Esophagus muscularis mucosa (tissue), 4 donors: ENCODE measurements at regions of chr3 and their contacts with region 1.

Region 1: DNA sequence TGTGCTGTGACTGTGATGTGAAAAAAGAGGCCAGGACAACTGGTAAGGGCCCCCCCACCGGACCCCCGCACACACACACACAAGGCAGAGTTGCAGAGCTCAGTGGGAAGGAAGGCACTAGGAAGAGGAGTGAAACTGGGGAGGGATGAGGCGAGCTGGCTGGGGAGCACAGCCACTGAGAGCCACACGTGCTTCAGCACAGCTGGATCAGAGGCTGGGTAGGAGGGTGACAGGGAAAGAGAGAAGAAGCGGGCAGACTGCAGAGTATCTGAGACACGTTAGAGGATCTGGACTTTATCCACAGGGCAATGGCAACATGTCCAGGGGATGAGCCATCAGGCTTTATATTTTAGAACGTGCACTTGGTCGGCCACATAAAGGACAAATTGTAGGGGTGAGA is 38.0 kb upstream of the TKT start:
- DNase-seq: no peak
- H3K4me3 ChIP-seq: no peak overlapping the region
- H3K27ac ChIP-seq: no peak overlapping the region
- H3K4me1 ChIP-seq: peaks cover 0 to 11% (median 6%) of the 10 kb centered on the region in 4 donors
- H3K27me3 ChIP-seq: no peaks in the 10 kb centered on the region
- CTCF ChIP-seq: no peak
- EP300 ChIP-seq: no peak
- POLR2A ChIP-seq: no peak

Region 2: DNA sequence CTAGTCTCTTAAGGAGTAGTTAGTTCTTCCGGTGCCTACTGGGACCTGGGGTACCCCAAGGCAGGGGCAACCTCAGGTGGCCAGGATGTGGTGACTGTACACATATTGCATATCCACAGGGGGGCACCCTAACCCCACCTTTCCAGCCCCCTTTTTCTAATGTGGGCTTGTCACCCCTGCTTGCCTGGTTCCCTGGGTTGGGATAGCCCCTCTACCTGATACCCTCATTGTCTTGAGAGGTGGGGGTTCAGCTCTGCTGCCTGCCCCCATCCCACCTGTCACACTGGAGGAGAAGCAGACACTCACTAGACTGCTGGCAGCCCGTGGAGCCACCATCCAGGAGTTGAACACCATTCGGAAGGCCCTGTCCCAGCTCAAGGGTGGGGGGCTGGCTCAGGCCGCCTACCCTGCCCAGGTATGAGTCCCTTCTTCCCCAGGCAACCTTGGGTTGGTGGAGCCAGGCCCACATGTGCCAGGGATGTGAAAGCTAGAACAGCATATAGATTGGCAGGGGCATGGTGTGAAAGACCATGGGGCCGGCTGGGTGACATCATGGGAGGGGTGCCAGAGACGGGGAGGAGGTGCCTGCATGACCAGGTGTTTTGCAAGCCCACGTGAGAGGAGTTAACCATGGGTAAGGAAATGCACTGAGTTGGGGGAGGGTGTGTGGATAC is 1002.2 kb before region 1 on chr3:
- intact Hi-C with region 1: no loop called
- DNase-seq: no peak
- H3K4me3 ChIP-seq: no peak overlapping the region
- H3K27ac ChIP-seq: no peak overlapping the region
- H3K4me1 ChIP-seq: peaks cover 14 to 18% (median 16%) of the 10 kb centered on the region in 4 donors
- H3K27me3 ChIP-seq: no peaks in the 10 kb centered on the region
- CTCF ChIP-seq: peak; percentile 20 to 29 (median 25)
- EP300 ChIP-seq: no peak
- POLR2A ChIP-seq: no peak

Region 3: DNA sequence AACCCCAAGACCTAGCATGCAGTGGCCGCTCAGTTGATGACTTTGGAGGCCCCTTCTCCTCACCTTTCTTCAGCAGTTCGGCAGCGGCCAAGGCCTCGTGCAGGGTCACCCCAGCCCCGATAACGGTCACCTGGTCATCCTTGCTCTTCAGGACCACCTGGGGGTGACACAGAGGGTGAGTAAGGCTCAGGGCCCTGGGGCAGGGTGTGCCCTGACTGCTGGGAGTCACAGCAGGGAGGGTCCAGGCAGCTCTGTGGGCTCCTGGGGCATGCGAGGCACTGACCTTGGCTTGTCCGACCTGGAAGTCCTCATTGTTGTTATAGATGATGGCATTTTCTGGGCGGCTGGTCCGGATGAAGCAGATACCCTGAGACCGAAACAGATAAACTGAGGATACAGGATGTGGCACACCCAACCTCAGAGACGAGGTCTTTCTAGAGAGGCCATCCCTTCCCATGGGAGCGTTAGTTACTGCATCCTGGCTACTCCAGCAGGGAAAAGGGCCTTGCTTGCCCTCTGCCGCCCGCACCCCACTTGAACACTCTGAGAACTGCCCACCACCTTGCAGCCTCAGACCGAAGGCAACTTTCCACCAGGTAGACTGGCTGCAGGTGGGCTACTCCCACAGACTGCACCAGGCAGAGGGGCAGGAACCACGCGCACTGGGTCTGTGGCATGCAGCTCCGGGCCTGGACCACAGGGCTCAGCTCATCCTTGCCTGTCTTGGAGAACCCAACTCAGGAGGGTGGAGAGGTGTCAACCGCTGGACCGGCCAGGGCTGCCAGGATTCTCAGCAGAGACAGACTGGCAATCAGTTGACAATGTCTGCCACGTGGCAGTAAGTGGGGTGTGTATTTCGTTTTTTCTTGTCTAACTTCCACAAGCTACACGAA is 65.6 kb before region 1 on chr3:
- intact Hi-C with region 1: loop called (anchors 5 kb)
- DNase-seq: no peak
- H3K4me3 ChIP-seq: no peak overlapping the region
- H3K27ac ChIP-seq: no peak overlapping the region
- H3K4me1 ChIP-seq: no peaks in the 10 kb centered on the region
- H3K27me3 ChIP-seq: no peaks in the 10 kb centered on the region
- CTCF ChIP-seq: no peak
- EP300 ChIP-seq: no peak
- POLR2A ChIP-seq: no peak

Region 4: DNA sequence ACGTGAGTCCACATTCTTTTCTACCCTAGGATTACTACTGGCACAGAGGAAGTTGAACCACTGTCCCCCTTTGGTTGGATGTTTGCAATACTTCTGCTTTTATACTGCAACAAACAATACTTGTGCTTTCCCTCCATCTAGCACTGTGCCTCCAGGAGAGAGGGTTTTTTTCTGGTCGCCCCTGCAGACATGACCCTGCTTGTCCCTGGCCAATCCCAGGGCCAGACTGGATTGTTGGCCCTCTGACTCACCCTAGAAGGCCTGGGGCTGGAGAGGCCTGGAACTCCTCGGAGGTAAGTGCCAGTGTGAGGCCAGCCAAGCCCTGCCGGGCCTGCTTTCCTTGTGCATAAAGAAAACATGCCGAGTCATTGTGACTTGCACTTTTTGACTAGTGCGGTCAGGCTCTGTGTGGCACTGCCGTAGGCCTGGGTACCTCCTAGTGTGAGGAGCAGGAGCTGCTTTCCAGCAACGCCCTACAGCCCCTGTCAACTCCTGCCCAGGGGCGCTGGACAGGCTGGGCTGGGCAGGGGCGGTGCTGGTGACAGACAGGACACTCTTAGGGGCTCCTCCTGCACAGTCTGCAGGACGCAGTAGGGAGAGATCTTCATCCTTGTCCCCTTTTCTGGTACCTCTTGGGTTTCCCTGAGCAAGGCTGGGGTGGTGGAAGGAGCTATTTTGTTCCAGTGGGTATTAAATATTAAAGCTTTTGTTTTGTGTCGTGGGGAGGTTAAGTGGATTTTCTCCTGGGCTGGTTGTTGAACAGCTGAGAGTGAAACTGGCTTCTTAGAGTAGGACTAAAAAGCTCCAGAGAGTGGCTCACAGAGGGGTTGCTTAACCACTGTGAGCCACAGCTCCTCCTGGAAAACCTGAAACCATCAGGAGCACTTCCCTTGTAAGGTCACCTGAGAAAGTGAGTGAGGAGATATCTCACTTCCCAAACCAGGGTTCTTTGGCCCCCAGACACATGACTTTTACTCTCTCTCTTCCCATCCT is 23.7 kb before region 1 on chr3:
- intact Hi-C with region 1: no loop called
- DNase-seq: peak; percentile 94
- H3K4me3 ChIP-seq: peak overlapping the region in 2 of 4 donors; percentile 4 to 13
- H3K27ac ChIP-seq: peak overlapping the region; percentile 85 to 90 (median 88)
- H3K4me1 ChIP-seq: peaks cover 23 to 37% (median 30%) of the 10 kb centered on the region in 4 donors
- H3K27me3 ChIP-seq: no peaks in the 10 kb centered on the region
- CTCF ChIP-seq: no peak
- EP300 ChIP-seq: no peak
- POLR2A ChIP-seq: no peak